Ovary (tissue), 10 donors: ENCODE measurements at regions of chr19 and their contacts with region 1.

Region 1: DNA sequence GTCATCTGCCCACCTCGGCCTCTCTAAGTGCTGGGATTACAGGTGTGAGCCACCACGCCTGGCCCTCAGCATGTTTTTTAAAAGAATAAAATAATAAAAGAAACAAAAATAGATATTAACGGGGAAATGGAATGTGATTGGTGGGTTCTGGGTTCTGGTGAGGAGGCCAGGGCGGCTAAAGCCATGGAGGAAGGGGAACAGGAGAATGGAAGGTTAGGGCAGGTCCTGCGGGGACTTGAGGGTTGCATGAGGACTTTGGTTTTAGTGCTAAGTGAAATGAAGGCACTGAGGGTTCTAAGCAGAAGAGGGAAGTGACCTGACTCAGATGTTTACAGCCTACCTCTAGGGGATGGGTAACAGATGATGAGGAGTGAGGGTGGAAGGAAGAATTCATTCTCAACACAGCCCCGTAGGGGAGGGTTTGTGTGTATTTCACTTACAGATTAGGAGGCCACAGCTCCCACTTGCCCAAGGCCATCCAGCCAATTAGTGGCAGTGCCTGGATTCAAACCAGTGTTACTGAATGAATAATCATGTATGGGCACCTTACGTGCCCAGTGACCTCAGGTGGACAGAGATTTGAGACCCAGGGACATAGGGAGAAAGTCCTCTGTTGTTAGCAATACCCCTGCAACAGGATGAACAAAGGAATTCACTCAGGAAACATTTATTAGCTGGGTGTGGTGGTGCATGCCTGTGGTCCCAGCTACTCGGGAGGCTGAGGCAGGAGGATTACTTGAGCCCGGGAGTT is 6.7 kb upstream of the MRPL4 start:
- DNase-seq: no peak
- H3K4me3 ChIP-seq: no peak overlapping the region
- H3K27ac ChIP-seq: no peak overlapping the region
- H3K4me1 ChIP-seq: no peaks in the 10 kb centered on the region
- H3K27me3 ChIP-seq: no peaks in the 10 kb centered on the region
- CTCF ChIP-seq: no peak
- EP300 ChIP-seq: no peak
- POLR2A ChIP-seq: no peak

Region 2: DNA sequence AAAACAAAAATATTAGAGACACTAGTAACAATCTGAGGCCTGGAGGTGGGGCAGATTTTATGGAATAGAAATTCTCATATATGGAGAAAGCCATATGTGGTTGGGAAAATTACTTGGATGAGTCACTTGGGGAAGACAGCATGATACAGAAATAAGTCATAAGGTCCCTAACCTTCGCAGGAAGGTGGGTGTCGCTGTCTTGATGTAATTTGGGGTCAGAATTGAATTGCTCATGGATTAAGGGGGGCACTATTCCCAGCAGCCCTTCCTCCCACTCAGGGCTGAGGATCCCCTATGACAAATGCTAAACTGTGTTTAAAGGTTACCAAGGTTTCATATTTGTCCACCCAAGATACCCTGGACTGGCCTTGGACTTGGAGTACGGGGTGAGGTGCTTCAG is 227.1 kb before region 1 on chr19:
- intact Hi-C with region 1: no loop called
- DNase-seq: no peak
- H3K4me3 ChIP-seq: no peak overlapping the region
- H3K27ac ChIP-seq: no peak overlapping the region
- H3K4me1 ChIP-seq: no peaks in the 10 kb centered on the region
- H3K27me3 ChIP-seq: no peaks in the 10 kb centered on the region
- CTCF ChIP-seq: no peak
- EP300 ChIP-seq: no peak
- POLR2A ChIP-seq: no peak

Region 3: GRCh38 chr19:10074153-10074552 is 171.2 kb before region 1 on chr19:
- intact Hi-C with region 1: no loop called
- DNase-seq: no peak
- H3K4me3 ChIP-seq: no peak overlapping the region
- H3K27ac ChIP-seq: no peak overlapping the region
- H3K4me1 ChIP-seq: no peaks in the 10 kb centered on the region
- H3K27me3 ChIP-seq: no peaks in the 10 kb centered on the region
- CTCF ChIP-seq: no peak
- EP300 ChIP-seq: no peak
- POLR2A ChIP-seq: no peak

Region 4: GRCh38 chr19:10106100-10106936 is 139.0 kb before region 1 on chr19 and contains the start of gene PPAN:
- intact Hi-C with region 1: loop called in 2 of 4 experiments (anchors 10 kb)
- DNase-seq: peak; percentile 97 to 99 (median 98)
- H3K4me3 ChIP-seq: peak within 1 kb of the TSS; percentile 70
- H3K27ac ChIP-seq: peak within 1 kb of the TSS in 1 of 2 donors; percentile 43
- H3K4me1 ChIP-seq: peaks cover 2% of the 10 kb centered on the region
- H3K27me3 ChIP-seq: no peaks in the 10 kb centered on the region
- CTCF ChIP-seq: no peak
- EP300 ChIP-seq: no peak
- POLR2A ChIP-seq: peak; percentile 79
- total RNA-seq, gene PPAN: 21.0 to 58.3 (median 44.4) TPM

Region 5: DNA sequence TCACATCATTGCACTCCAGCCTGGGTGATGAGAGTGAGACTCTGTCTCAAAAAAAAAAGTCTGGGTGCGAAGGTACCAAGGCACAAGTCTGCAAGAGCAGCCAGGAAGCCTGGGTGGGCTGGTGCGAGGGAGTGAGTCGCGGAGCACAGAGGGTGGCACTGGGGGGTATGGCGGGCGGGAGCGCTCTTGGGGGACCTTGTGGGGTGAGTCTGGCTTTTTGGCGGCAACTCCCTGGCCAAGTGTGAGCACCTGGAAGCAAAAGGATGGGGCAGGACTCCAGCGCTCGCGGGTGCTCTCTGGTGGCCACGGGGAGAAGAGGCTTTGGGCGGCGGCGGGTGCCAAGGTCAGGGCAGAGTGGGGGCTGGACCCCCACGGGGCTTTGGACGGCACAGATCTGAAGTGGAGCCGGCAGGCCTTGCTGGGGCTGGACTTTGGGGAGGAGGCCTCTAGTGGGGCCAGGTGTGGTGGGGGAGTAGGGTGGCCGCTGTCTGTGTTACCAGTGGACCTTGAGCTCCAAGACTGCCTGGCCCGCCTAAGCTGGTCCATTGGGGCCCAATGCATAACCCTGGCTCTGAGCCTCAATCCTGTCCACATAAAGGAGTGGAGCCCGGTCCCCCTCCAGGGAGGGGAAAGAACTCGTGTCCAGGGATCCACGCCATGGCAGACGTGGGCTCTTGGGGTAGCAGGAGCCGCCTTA is 132.3 kb before region 1 on chr19:
- intact Hi-C with region 1: loop called in 2 of 4 experiments (anchors 10 kb)
- DNase-seq: peak in 3 of 5 donors; percentile 39 to 79 (median 68)
- H3K4me3 ChIP-seq: no peak overlapping the region
- H3K27ac ChIP-seq: peak overlapping the region in 1 of 2 donors; percentile 16
- H3K4me1 ChIP-seq: no peaks in the 10 kb centered on the region
- H3K27me3 ChIP-seq: no peaks in the 10 kb centered on the region
- CTCF ChIP-seq: peak in 1 of 3 donors; percentile 43
- EP300 ChIP-seq: no peak
- POLR2A ChIP-seq: no peak

Region 6: DNA sequence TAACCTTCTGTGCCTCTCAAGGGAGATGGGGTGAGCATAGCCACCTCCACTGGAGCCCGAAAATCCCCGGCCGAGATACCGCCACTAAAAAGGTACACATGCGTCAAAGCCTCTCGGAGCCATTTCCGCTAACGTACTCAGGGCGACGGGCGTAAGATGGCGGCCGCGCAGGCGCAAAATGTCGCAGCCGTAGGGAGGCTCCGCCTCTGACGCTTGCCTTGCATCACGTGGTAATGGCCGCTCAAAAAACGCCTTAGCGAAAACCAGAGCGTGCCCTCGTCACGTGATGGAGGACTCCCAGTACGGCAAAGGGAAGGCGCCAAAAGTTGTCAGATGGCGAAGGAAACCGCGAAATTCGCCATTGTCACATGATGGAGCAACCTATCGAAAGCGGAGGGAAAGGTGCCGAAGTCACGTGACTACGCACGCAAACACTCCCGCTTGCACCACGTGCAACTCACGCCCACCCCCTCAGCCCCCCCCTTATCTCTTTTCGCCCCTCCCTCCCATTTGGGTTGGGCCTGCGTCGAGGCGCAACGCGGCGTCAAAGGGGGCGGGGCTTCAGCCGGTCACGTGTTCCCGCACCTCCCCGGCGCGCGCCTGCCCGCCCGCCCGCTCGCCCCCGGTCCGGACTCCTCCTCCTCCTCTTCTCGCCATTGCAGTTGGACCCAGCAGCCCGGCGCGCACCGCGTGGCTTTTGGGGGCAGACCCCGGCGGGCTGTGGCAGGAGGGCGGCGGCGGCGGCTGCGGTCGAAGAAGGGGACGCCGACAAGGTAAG is 408.5 kb after region 1 on chr19 and contains the start of gene ILF3:
- intact Hi-C with region 1: no loop called
- DNase-seq: peak; percentile 100
- H3K4me3 ChIP-seq: peak within 1 kb of the TSS; percentile 87
- H3K27ac ChIP-seq: peak within 1 kb of the TSS; percentile 96 to 98
- H3K4me1 ChIP-seq: peaks cover 7% of the 10 kb centered on the region
- H3K27me3 ChIP-seq: no peaks in the 10 kb centered on the region
- CTCF ChIP-seq: peak in 1 of 3 donors; percentile 9
- EP300 ChIP-seq: peak; percentile 83
- POLR2A ChIP-seq: peak; percentile 100
- total RNA-seq, gene ILF3: 90.0 to 295 (median 246) TPM